ENCODE measurements at regions of chr3 and their contacts with region 1.

Region 1: DNA sequence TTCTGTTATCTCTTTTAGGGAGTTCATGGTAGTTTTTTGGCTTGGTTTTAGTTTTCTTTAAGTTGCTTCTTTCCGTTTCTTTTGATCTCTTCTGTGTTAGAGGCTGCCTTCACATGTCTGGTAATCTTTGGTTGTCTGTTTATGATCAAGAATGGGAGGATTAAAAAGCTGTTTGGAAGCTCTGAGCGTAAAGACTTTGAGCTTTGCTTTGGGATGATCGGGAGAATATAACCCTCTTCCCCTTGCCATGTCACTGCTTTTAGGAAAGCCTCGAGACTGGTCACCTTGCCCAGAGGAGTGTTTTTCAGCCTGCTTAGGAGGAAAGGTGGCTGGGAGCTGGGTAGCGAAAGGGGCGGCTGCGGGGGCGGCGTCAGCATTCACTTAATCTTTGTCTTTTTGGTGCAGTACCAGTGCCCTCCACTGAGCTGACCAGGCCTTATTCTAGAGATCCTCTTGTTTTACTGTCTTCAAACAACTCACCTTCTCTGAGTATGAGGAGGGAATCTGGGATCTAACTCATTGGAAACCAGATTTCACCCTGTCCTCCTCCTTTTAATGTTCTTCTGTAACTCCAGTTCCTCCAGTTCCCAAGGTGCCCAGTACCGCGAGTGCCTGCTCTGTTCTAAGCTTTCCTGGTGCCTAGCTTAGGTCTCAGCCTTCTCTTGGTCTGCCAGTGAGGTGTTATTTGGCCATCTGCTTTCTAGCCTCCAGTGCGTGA is 15.5 kb downstream of the TATDN2 start:
- DNase-seq: peak; percentile 86
- ATAC-seq: peak; percentile 94
- H3K4me3 Mint-ChIP-seq: peak overlapping the region; percentile 59
- H3K27ac Mint-ChIP-seq: peak overlapping the region; percentile 91
- H3K4me1 Mint-ChIP-seq: peaks cover 85% of the 10 kb centered on the region
- H3K27me3 Mint-ChIP-seq: no peaks in the 10 kb centered on the region

Region 2: GRCh38 chr3:10242182-10243065 is 21.4 kb before region 1 on chr3:
- CTCF ChIA-PET with region 1: interaction called, 10 read pairs
- POLR2A ChIA-PET with region 1: interaction called, 6 read pairs
- intact Hi-C with region 1: no loop called
- DNase-seq: peak; percentile 91
- ATAC-seq: peak; percentile 94
- H3K4me3 Mint-ChIP-seq: peak overlapping the region; percentile 42
- H3K27ac Mint-ChIP-seq: peak overlapping the region; percentile 93
- H3K4me1 Mint-ChIP-seq: peaks cover 62% of the 10 kb centered on the region
- H3K27me3 Mint-ChIP-seq: no peaks in the 10 kb centered on the region

Region 3: GRCh38 chr3:10286596-10287330 is 23.0 kb after region 1 on chr3:
- CTCF ChIA-PET with region 1: interaction called, 31 read pairs
- POLR2A ChIA-PET with region 1: interaction called, 4 read pairs
- intact Hi-C with region 1: no loop called
- DNase-seq: peak; percentile 53
- ATAC-seq: peak; percentile 33
- H3K4me3 Mint-ChIP-seq: no peak overlapping the region
- H3K27ac Mint-ChIP-seq: peak overlapping the region; percentile 58
- H3K4me1 Mint-ChIP-seq: peaks cover 48% of the 10 kb centered on the region
- H3K27me3 Mint-ChIP-seq: no peaks in the 10 kb centered on the region

Measured in activated CD4-positive, alpha-beta T cell treated with anti-CD3 and anti-CD28 coated beads for 36 hours (primary cell).